PC-3 (cell line): ENCODE measurements at regions of chr17 and their contacts with region 1.

Region 1: GRCh38 chr17:75524953-75525719 is at the start of gene LLGL2:
- DNase-seq: peak; percentile 98
- ATAC-seq: peak; percentile 82
- H3K4me3 ChIP-seq: peak within 1 kb of the TSS; percentile 84
- H3K27ac ChIP-seq: peak within 1 kb of the TSS; percentile 75
- H3K4me1 ChIP-seq: peaks cover 13% of the 10 kb centered on the region
- H3K27me3 ChIP-seq: no peaks in the 10 kb centered on the region
- CTCF ChIP-seq: peak; percentile 69
- total RNA-seq, gene LLGL2: 92.9 and 122 TPM in 2 replicates

Region 2: GRCh38 chr17:75549221-75550138 is 24.3 kb after region 1 on chr17:
- CTCF ChIA-PET with region 1: interaction called, 7 read pairs
- POLR2A ChIA-PET with region 1: interaction called, 9 read pairs
- intact Hi-C with region 1: loop called (anchors 2 kb)
- DNase-seq: peak; percentile 96
- ATAC-seq: peak; percentile 94
- H3K4me3 ChIP-seq: peak overlapping the region; percentile 57
- H3K27ac ChIP-seq: peak overlapping the region; percentile 98
- H3K4me1 ChIP-seq: peaks cover 30% of the 10 kb centered on the region
- H3K27me3 ChIP-seq: no peaks in the 10 kb centered on the region
- CTCF ChIP-seq: no peak

Region 3: GRCh38 chr17:75559958-75560533 is 34.9 kb after region 1 on chr17:
- CTCF ChIA-PET with region 1: interaction called, 12 read pairs
- POLR2A ChIA-PET with region 1: interaction called, 6 read pairs
- intact Hi-C with region 1: no loop called
- DNase-seq: no peak
- ATAC-seq: no peak; the same call in 1 of the 2 replicates
- H3K4me3 ChIP-seq: no peak overlapping the region
- H3K27ac ChIP-seq: no peak overlapping the region
- H3K4me1 ChIP-seq: peaks cover 43% of the 10 kb centered on the region
- H3K27me3 ChIP-seq: no peaks in the 10 kb centered on the region
- CTCF ChIP-seq: no peak

Region 4: DNA sequence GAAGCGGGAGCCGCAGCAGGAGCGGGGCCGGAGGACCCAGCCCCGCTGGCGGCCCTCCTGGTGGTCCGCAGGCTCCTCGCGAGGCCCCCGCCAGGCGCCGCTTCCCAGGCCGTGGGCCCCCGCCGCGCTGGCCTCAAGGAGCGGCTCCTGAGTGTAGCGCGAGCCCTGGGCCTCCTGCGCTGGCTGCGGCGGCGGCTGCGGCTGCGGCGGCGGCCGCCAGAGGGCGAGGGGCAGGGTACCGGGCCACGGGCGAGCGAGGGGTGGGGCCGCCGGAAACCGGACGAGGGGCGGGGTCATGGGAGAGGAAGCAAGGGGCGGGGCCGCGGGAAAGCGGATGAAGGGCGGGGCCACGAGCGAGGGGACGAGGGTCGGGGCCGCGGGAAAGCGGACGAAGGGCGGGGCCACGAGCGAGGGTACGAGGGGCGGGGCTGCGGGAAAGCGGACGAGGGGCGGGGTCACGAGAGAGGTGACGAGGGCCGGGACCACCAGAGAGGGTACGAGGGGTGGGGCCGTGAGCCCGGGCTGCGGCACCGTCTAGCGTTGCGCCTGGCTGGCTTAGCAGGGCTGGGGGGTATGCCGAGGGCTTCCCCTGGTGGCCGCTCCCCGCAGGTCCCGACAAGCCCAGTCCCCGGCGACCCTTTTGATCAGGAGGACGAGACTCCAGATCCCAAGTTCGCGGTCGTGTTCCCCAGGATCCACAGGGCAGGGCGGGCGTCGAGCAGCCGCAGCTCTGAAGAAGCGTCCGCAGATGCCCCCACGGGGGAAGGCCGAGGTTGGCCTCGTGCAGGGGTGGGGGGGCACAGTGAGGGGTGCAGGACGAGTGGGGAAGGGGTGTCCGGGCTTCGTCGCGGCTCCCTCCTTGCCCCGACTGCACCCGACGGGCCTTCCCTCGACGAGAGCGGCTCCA is 64.1 kb after region 1 on chr17:
- CTCF ChIA-PET with region 1: interaction called, 10 read pairs
- POLR2A ChIA-PET with region 1: no interaction called
- intact Hi-C with region 1: loop called (anchors 2 kb)
- DNase-seq: peak; percentile 94
- ATAC-seq: peak; percentile 94
- H3K4me3 ChIP-seq: peak overlapping the region; percentile 65
- H3K27ac ChIP-seq: no peak overlapping the region
- H3K4me1 ChIP-seq: peaks cover 10% of the 10 kb centered on the region
- H3K27me3 ChIP-seq: no peaks in the 10 kb centered on the region
- CTCF ChIP-seq: peak; percentile 69